ENCODE measurements at regions of chr6 and their contacts with region 1.

Region 1: DNA sequence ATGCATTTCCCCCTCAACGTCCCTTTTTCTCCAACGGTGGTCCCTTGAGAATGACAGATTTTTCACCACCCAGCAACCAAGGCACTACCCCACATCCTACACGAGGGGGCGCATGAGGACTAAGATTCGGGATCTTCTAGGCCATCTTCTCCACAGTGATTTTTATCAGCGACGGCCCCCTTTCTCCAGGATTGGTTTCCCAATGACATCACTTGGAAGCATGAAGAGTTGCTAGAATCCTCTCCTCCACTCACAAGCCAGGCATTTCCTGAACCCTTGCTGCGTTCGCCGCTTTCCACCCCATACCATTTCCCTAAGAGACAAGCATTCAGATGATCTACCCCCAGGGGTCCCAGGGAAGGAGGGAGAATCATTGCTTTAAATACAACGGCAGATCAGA is 252.0 kb downstream of the HIVEP2 start:
- DNase-seq: peak; percentile 70
- H3K4me3 Mint-ChIP-seq: no peak overlapping the region
- H3K27ac Mint-ChIP-seq: no peak overlapping the region
- H3K4me1 Mint-ChIP-seq: peaks cover 18% of the 10 kb centered on the region
- H3K27me3 Mint-ChIP-seq: no peaks in the 10 kb centered on the region

Region 2: GRCh38 chr6:143026696-143027449 is 333.9 kb after region 1 on chr6:
- CTCF ChIA-PET with region 1: interaction called, 10 read pairs
- POLR2A ChIA-PET with region 1: no interaction called
- DNase-seq: peak; percentile 48
- H3K4me3 Mint-ChIP-seq: no peak overlapping the region
- H3K27ac Mint-ChIP-seq: no peak overlapping the region
- H3K4me1 Mint-ChIP-seq: no peaks in the 10 kb centered on the region
- H3K27me3 Mint-ChIP-seq: no peaks in the 10 kb centered on the region